HepG2 (cell line): ENCODE measurements at regions of chr9 and their contacts with region 1.

Region 1: GRCh38 chr9:136784249-136784996 is 6.7 kb upstream of the TMEM141 start:
- DNase-seq: no peak
- ATAC-seq: no peak
- H3K4me3 ChIP-seq: no peak overlapping the region
- H3K27ac ChIP-seq: peak overlapping the region; percentile 64
- H3K4me1 ChIP-seq: peaks cover 83% of the 10 kb centered on the region
- H3K27me3 ChIP-seq: no peaks in the 10 kb centered on the region
- CTCF ChIP-seq: peak; percentile 53
- EP300 ChIP-seq: no peak
- POLR2A ChIP-seq: no peak
- RAD21 ChIP-seq: 0 out of 2 replicates have a peak, but pooled peaks have one; percentile 33

Region 2: GRCh38 chr9:136757751-136758140 is 26.7 kb before region 1 on chr9:
- CTCF ChIA-PET with region 1: interaction called, 3 read pairs
- POLR2A ChIA-PET with region 1: no interaction called
- in situ Hi-C with region 1: no loop called
- intact Hi-C with region 1: loop called (anchors 1 kb)
- DNase-seq: no peak
- ATAC-seq: no peak
- H3K4me3 ChIP-seq: no peak overlapping the region
- H3K27ac ChIP-seq: no peak overlapping the region
- H3K4me1 ChIP-seq: peaks cover 37% of the 10 kb centered on the region
- H3K27me3 ChIP-seq: peaks cover 7 to 37% of the 10 kb centered on the region in 2 experiments; a peak in 3 of 5 replicates
- CTCF ChIP-seq: no peak
- EP300 ChIP-seq: no peak
- POLR2A ChIP-seq: no peak
- RAD21 ChIP-seq: no peak